ENCODE measurements at regions of chr3 and their contacts with region 1.

Region 1: DNA sequence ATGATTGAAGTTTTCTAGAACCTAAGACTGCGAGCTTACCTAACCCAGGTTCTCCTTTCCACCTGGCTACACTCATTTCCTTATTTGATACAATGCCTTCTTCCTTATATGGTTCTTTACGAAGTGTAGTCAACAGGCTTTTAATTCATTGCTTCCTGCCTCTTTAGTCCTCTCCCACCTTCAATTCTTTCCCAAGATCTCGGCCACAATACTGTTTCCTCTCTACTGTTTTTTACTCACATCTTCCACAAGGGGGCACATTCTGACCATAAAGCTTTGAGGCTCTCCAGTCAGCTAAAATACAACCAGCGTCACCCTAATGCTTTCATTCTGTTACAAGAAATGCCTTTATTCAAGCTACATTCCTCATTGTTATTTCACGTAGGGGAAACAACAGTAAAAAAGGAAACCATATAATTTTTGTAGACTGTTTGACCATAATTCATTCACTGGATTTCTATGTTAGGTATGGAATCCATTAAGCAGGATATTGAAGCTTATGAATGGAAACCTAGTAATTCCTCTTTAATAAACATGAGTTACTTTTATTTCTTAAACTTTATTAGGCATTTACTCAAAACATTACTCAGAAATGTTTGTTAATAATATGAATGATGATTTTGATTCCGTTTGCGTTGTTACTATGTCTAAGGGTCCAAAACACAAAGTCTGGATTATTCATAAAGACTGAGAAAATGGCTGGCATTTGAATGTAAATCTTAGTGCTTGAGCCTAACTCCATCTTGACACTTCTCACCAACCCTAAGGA is 29.5 kb upstream of the VEPH1 start:
- DNase-seq: peak; percentile 53
- H3K27ac ChIP-seq: no peak overlapping the region
- CTCF ChIP-seq: peak; percentile 81

Region 2: DNA sequence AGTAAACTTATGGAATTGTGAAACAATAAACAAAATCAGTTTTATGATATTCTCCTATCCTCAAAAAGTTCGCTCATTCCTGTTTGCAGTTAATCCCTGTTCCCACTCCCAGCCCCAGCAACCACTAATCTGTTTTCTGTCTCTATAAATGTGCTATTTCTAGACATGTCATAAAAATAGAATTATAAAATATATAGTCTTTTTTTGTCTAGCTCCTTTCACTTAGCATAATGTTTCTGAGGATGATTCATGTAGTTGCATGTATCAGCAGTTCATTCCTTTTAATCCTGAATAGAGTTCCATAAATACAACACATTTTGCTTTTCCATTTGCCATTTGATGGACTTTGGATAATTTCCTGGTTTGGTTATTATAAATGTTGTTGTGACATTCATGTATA is 1272.4 kb before region 1 on chr3:
- CTCF ChIA-PET with region 1: no interaction called
- POLR2A ChIA-PET with region 1: no interaction called
- DNase-seq: no peak
- H3K27ac ChIP-seq: no peak overlapping the region
- CTCF ChIP-seq: no peak

Region 3: DNA sequence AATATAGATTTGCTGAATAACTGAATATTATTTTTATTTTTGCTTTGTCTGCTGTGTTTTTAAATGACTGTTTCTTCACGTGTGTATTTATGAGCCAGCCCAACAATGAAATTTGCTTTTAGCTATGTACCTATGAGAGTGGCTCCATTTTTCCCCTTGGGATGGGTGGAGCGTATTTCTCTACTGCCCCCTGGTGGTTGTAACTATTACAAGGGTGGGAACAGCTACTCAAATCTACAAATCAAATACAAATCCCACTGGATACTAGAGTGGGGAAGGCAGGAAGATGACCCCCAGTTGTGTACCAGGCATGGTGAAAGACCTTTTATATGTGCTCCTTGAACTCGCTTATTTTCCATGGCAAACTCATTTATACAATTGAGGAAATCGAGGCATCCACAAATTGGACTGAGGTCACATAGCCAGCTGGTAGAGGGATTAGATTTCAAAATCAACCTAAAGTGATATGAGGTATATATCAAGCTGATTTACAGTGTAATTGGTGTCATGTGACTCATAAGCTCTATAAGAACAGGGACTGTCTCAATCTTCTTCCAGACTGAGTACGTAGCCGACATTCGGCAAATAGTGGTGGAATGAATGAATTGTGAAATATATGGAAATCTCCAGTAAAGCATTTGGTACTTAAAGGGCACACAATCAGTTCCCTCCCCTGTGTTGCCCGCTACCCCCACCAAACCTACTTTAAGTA is 40.0 kb after region 1 on chr3:
- CTCF ChIA-PET with region 1: interaction called, 21 read pairs
- POLR2A ChIA-PET with region 1: no interaction called
- DNase-seq: peak; percentile 58
- H3K27ac ChIP-seq: no peak overlapping the region
- CTCF ChIP-seq: peak; percentile 81

Measured in RWPE1 (cell line).